ENCODE measurements at regions of chr10 and their contacts with region 1.

Region 1: DNA sequence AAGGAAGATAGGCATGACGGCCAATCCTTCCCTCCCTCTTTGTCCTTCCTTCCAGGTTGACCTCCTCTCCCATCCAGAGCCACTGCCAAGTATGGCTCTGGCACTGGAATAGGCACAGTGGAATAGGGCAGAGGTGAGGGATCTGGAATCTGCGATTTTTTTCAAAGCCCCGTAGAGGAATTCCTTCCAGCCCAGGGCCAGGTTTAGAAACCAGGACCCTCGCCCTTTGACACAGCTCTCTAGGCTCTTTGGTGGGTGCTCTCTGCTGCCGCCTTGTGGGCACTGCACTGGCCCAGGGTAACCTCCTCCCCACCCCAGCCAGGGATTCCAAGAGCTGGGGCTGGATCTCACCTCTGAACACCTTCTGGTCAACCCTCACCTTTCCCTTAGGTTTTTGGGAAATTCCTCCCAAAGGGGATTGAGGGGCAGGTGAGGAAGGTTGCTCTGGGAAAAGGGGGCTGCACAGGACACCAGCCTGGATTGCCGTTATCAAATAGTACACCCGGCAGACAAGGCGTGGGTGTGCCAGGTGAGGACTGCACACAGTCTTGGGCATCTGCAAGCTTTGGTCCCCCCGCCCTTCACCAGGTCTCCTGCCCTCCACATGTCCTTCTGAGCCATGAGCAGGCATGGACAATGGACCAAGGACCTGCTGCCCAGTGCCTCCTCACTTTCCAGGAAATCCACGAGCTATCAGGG is 22.8 kb downstream of the C10orf105 start:
- DNase-seq: peak; percentile 67
- CTCF ChIP-seq: peak; percentile 86

Region 2: GRCh38 chr10:71314028-71314693 is 382.6 kb before region 1 on chr10:
- CTCF ChIA-PET with region 1: interaction called, 37 read pairs
- POLR2A ChIA-PET with region 1: no interaction called
- DNase-seq: peak; percentile 84
- CTCF ChIP-seq: peak; percentile 75

Region 3: DNA sequence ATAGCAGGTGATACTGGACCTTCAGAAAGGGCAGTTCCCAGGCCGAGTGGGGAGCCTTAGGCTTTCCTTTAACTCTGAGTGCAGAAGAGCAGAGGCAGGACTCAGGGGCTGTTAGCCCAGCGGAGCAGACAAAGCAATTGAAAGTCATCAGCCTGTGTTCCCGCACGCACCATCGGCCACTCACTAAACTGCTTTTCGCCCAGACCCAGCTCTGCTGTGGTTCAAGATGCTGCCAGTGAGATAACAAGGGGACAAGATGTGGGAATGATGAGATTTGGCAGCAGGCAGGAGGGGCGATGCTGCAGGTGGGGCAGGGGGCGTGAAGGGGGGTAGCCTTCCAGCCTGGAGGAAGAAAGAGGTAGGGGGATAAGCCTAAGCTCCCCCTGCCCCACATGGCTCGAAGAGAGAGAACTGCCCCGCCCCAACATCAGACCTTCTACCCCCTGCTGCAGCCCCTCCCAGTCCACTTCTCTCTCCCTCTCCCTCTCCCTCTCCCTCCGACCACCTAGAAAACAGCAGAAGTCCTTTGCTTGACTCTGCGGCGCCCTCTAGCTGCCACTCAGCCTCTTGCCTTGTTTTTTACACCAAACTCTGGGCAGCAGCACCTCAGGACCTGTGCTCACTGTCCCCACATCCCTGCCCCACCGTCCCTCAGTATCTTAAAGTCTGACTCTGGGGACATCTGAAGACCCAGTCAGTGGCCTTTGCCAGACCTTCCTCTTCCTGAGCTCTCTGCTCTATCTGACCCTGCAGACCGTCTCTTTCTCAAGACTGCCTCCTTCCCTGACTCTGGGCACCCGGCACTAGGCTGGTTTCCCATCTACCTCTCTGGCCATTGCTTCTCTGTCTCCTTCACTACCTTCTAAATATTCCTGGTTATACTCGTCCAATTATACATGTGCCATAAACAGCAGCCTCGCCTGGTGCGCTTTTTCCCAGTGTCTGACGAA is 87.7 kb before region 1 on chr10:
- CTCF ChIA-PET with region 1: interaction called, 10 read pairs
- POLR2A ChIA-PET with region 1: no interaction called
- DNase-seq: peak; percentile 73
- CTCF ChIP-seq: peak; percentile 78

Region 4: DNA sequence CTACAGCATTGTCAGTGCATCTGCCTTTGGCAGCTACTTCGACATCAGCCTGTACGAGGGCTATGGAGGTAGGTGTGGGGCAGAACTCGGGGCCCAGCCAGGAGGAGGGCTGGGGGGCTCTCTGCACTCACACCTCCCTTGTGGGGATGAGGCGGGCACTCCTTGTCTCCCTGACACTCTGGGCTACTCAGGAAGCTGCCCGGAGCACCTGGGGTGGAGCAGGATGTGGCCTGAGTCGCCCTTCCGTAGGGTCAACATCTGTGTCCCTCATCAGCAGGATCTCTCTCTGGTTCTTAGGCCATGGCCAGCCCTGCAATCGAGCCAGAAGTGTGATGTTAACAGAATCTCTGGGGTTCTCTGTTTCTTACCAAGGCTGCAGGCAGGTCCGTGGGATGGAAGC is 17.4 kb before region 1 on chr10:
- CTCF ChIA-PET with region 1: interaction called, 20 read pairs
- POLR2A ChIA-PET with region 1: no interaction called
- DNase-seq: no peak
- CTCF ChIP-seq: no peak

Region 5: DNA sequence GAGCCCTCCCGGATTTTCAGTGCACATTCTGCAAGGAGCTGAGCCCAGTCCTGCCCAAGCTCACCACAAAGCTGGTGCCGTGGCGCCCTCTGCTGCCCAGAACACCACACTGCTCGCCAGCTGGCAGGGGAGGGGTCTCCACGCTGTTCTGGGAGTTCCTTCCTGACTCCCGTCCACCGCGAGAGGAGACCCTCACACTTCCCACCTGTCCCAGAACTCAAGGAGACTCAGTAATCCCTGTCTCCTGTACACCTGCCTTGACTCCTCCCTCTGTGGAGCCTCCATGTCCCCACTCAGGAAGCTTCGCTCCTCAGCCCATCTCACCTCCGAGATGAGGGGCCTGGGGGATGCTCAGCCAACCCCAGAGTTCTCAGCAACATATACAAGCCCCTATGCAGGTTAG is 11.5 kb after region 1 on chr10:
- CTCF ChIA-PET with region 1: interaction called, 168 read pairs
- POLR2A ChIA-PET with region 1: no interaction called
- DNase-seq: peak; percentile 78
- CTCF ChIP-seq: peak; percentile 87

Region 6: GRCh38 chr10:71727738-71728737 is 31.3 kb after region 1 on chr10:
- CTCF ChIA-PET with region 1: interaction called, 37 read pairs
- POLR2A ChIA-PET with region 1: no interaction called
- DNase-seq: peak; percentile 77
- CTCF ChIP-seq: no peak

Region 7: GRCh38 chr10:71812016-71812912 is 115.5 kb after region 1 on chr10:
- CTCF ChIA-PET with region 1: interaction called, 34 read pairs
- POLR2A ChIA-PET with region 1: no interaction called
- DNase-seq: peak; percentile 87
- CTCF ChIP-seq: peak; percentile 92

Measured in GM10248 (cell line).